CD4-positive, alpha-beta memory T cell (primary cell): ENCODE measurements at regions of chr5 and their contacts with region 1.

Region 1: GRCh38 chr5:41903892-41904799 is at the start of gene RIMOC1:
- DNase-seq: peak; percentile 96 to 98 (median 98)
- H3K4me3 ChIP-seq: peak within 1 kb of the TSS; percentile 82 to 90
- H3K4me3 Mint-ChIP-seq: peak within 1 kb of the TSS; percentile 93 to 99 (median 98)
- H3K27ac ChIP-seq: peak within 1 kb of the TSS; percentile 74
- H3K27ac Mint-ChIP-seq: peak within 1 kb of the TSS; percentile 96 to 100 (median 97)
- H3K4me1 ChIP-seq: peaks cover 16% of the 10 kb centered on the region
- H3K4me1 Mint-ChIP-seq: peaks cover 22 to 48% (median 29%) of the 10 kb centered on the region in 4 donors
- H3K27me3 ChIP-seq: no peaks in the 10 kb centered on the region
- H3K27me3 Mint-ChIP-seq: peaks cover 0 to 2% of the 10 kb centered on the region in 2 donors
- total RNA-seq, gene RIMOC1: 33.1 to 33.7 TPM

Region 2: DNA sequence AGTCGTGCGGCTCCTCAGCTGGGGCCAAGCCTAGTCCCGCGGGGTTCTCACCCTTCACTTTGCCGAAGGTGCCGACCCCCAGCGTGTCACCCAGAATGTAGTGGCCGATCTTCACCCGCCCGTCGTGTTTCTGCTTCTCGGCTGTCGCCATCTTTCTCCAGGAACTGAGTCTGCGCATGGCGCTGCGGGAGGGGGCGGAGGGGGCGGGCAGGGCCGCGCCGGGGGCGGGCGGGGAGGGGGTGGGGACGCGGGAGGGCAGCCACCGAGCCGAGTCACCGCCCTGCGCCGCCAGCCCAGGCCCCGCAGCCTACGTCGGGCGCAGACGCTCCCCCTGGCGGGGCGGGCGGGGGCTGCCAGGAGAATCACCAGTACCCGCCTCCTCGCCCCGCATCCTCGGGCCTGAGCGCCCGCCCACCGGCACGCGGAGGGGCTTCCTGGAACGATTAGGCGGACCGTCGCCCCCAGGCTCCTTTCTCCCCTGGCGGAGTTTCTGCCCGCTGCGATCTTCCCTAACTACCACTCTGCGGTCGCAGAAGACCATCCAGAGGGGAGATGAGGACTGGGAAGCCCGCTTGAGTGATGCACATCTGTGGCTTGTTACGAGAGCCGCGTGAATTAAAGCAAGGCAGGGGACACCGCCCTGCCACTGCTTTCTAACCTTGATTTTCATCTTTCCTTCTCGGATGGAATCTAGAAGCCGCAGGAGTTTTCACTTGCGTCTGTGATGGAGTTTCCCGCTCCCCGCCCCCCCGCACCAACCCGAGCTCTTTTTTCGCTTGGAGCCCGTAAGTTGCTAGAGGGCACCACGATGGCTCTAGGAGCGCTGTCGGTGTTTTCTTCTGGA is 1105.9 kb before region 1 on chr5 and contains the start of gene PRKAA1:
- CTCF ChIA-PET with region 1: no interaction called
- POLR2A ChIA-PET with region 1: no interaction called
- intact Hi-C with region 1: loop called (anchors 1 kb)
- DNase-seq: peak; percentile 88 to 93 (median 91)
- H3K4me3 ChIP-seq: peak within 1 kb of the TSS; percentile 71 to 91
- H3K4me3 Mint-ChIP-seq: peak within 1 kb of the TSS; percentile 91 to 97 (median 94)
- H3K27ac ChIP-seq: peak within 1 kb of the TSS; percentile 91
- H3K27ac Mint-ChIP-seq: peak within 1 kb of the TSS; percentile 91 to 98 (median 95)
- H3K4me1 ChIP-seq: peaks cover 34% of the 10 kb centered on the region
- H3K4me1 Mint-ChIP-seq: peaks cover 27 to 52% (median 42%) of the 10 kb centered on the region in 4 donors
- H3K27me3 ChIP-seq: no peaks in the 10 kb centered on the region
- H3K27me3 Mint-ChIP-seq: no peaks in the 10 kb centered on the region
- total RNA-seq, gene PRKAA1: 113 to 120 TPM

Region 3: DNA sequence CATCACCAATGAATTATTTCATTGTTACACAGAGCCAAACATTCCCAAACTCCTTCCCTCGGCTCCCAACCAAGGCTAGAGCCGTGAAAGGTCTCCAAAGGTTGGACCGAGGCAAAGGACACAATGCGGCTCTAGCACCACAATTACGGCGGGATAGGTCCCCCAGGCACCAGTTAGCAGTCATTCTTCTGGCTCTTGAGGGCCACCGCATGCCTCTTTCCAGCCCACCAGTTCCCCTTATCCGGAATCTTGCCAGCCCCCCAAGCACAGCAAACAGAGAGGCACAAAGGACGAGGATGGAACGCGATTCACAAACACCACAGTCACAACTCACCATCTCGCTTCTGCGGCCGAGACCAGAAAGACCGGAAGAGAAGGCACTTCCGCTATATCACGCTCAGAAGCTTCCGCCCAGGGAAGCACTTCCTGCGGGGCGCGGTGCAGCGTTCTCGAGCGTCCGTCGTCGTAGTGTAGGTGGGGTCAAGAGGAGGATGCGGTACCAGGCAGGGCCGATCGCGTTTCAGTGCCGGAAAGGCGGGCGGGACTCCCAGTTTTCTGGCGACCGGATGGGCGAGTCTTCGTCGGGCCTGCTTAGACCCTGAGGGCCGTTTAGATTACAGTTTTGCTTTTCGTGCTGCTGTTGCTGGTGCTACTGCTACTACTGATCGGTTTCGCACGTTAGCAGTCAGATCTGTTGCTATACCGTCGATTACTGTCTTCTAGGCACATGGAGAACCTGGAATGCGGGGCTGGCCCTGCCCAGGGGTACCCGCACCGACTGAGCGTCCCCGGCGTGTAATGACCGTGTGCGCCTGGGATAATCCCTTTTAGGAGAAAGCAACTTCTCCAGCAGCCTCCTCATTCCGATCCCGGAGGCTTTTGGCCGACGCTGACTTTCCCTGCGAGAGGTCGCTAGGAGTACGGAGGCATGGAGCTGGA is 1069.0 kb before region 1 on chr5 and contains the start of gene RPL37:
- CTCF ChIA-PET with region 1: no interaction called
- POLR2A ChIA-PET with region 1: interaction called, 9 read pairs
- intact Hi-C with region 1: loop called (anchors 1 kb)
- DNase-seq: peak; percentile 88 to 91 (median 90)
- H3K4me3 ChIP-seq: peak within 1 kb of the TSS; percentile 71 to 99
- H3K4me3 Mint-ChIP-seq: peak within 1 kb of the TSS; percentile 97 to 100 (median 98)
- H3K27ac ChIP-seq: peak within 1 kb of the TSS; percentile 92
- H3K27ac Mint-ChIP-seq: peak within 1 kb of the TSS; percentile 94 to 100 (median 99)
- H3K4me1 ChIP-seq: peaks cover 41% of the 10 kb centered on the region
- H3K4me1 Mint-ChIP-seq: peaks cover 20 to 68% (median 47%) of the 10 kb centered on the region in 4 donors
- H3K27me3 ChIP-seq: no peaks in the 10 kb centered on the region
- H3K27me3 Mint-ChIP-seq: no peaks in the 10 kb centered on the region
- total RNA-seq, gene RPL37: 2,354 to 2,406 TPM

Region 4: GRCh38 chr5:41869739-41870626 is 34.2 kb before region 1 on chr5 and contains the start of gene OXCT1:
- CTCF ChIA-PET with region 1: interaction called, 11 read pairs
- POLR2A ChIA-PET with region 1: interaction called, 79 read pairs
- intact Hi-C with region 1: loop called (anchors 1 kb)
- DNase-seq: peak; percentile 91 to 96 (median 96)
- H3K4me3 ChIP-seq: peak within 1 kb of the TSS; percentile 74 to 81
- H3K4me3 Mint-ChIP-seq: peak within 1 kb of the TSS; percentile 85 to 96 (median 91)
- H3K27ac ChIP-seq: peak within 1 kb of the TSS; percentile 93
- H3K27ac Mint-ChIP-seq: peak within 1 kb of the TSS; percentile 94 to 99 (median 97)
- H3K4me1 ChIP-seq: peaks cover 55% of the 10 kb centered on the region
- H3K4me1 Mint-ChIP-seq: peaks cover 37 to 70% (median 46%) of the 10 kb centered on the region in 4 donors
- H3K27me3 ChIP-seq: no peaks in the 10 kb centered on the region
- H3K27me3 Mint-ChIP-seq: no peaks in the 10 kb centered on the region
- total RNA-seq, gene OXCT1: 34.1 to 37.5 TPM

Region 5: GRCh38 chr5:41893074-41893851 is 10.9 kb before region 1 on chr5:
- CTCF ChIA-PET with region 1: no interaction called
- POLR2A ChIA-PET with region 1: interaction called, 15 read pairs
- intact Hi-C with region 1: no loop called
- DNase-seq: no peak
- H3K4me3 ChIP-seq: no peak overlapping the region
- H3K4me3 Mint-ChIP-seq: peak overlapping the region in 5 of 8 donors; percentile 17 to 61 (median 43)
- H3K27ac ChIP-seq: no peak overlapping the region
- H3K27ac Mint-ChIP-seq: peak overlapping the region in 1 of 7 donors; percentile 53
- H3K4me1 ChIP-seq: no peaks in the 10 kb centered on the region
- H3K4me1 Mint-ChIP-seq: peaks cover 0 to 10% (median 6%) of the 10 kb centered on the region in 4 donors
- H3K27me3 ChIP-seq: no peaks in the 10 kb centered on the region
- H3K27me3 Mint-ChIP-seq: peaks cover 1 to 14% of the 10 kb centered on the region in 2 donors

Region 6: DNA sequence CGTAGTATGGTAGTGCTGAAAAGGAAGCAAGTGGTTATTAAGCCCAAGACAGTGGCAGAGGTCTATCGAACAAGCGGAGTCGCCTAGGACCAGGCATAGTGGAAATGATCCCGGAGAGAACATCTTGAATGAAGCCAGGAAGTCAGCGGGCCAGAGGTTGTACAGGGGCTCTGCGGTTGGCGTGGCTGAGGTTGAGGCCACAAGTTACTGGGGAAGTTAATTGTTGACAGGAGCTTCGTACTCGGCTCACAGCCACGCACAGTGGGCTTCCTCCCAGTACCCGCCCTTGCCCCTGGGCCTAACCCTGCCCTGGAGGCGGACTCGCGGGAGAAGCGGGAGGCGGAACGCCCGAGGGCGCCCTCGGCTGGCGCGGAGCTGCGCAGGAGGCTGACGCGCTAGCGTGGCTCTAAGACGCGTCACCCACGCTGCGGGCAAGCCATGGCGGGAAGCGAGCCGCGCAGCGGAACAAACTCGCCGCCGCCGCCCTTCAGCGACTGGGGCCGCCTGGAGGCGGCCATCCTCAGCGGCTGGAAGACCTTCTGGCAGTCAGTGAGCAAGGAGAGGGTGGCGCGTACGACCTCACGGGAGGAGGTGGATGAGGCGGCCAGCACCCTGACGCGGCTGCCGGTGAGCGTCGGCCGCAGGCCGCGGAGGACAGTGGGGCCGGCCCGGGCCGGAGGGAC is 20.9 kb after region 1 on chr5 and contains the start of gene FBXO4:
- CTCF ChIA-PET with region 1: interaction called, 7 read pairs
- POLR2A ChIA-PET with region 1: interaction called, 85 read pairs
- intact Hi-C with region 1: loop called (anchors 1 kb)
- DNase-seq: peak; percentile 89 to 93 (median 91)
- H3K4me3 ChIP-seq: peak within 1 kb of the TSS; percentile 83 to 95
- H3K4me3 Mint-ChIP-seq: peak within 1 kb of the TSS; percentile 81 to 91 (median 89)
- H3K27ac ChIP-seq: peak within 1 kb of the TSS; percentile 93
- H3K27ac Mint-ChIP-seq: peak within 1 kb of the TSS; percentile 81 to 100 (median 98)
- H3K4me1 ChIP-seq: peaks cover 25% of the 10 kb centered on the region
- H3K4me1 Mint-ChIP-seq: peaks cover 10 to 33% (median 22%) of the 10 kb centered on the region in 4 donors
- H3K27me3 ChIP-seq: no peaks in the 10 kb centered on the region
- H3K27me3 Mint-ChIP-seq: no peaks in the 10 kb centered on the region
- total RNA-seq, gene FBXO4: 15.1 to 18.2 TPM

Region 7: DNA sequence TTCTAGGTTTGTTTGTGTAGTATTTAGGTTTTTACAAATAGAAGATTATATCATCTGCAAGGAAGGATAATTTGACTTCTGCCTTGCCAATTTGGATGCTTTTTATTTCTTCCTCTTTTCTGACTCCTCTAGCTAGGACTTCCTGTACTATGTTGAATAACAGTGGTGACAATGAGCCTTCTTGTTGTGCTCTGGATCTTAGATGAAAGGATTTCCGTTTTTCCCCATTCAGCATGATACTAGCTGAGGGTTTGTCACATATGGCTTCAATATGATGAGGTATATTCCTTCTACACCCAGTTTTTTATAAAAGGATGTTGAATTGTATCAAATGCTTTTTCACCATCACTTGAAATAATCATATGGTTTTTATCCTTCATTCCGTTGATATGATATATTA is 122.3 kb after region 1 on chr5:
- CTCF ChIA-PET with region 1: no interaction called
- POLR2A ChIA-PET with region 1: no interaction called
- intact Hi-C with region 1: no loop called
- DNase-seq: no peak
- H3K4me3 ChIP-seq: no peak overlapping the region
- H3K4me3 Mint-ChIP-seq: no peak overlapping the region
- H3K27ac ChIP-seq: no peak overlapping the region
- H3K27ac Mint-ChIP-seq: no peak overlapping the region
- H3K4me1 ChIP-seq: no peaks in the 10 kb centered on the region
- H3K4me1 Mint-ChIP-seq: no peaks in the 10 kb centered on the region
- H3K27me3 ChIP-seq: no peaks in the 10 kb centered on the region
- H3K27me3 Mint-ChIP-seq: peaks cover 7 to 17% of the 10 kb centered on the region in 2 donors

Region 8: DNA sequence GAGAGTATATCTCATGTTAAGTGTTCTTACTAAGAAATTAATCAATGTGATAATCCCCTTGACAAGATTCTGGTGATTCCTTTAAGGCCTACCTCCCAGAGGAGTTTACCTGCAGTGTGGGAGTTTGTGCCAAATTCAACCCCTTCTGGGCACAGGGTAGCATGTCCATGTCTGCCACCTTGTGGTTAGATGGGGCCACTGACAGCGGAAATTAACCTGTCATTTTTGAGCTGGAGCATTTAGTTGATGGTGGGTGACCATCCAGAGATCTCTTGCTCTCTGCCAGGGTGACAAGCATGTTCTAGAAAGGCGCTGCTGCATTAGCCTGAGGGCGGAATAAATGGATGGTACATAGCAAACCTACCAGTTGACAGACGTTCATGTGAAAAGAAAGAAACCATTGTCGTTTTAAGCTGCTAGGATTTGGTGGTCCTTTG is 153.1 kb after region 1 on chr5:
- CTCF ChIA-PET with region 1: interaction called, 10 read pairs
- POLR2A ChIA-PET with region 1: no interaction called
- intact Hi-C with region 1: no loop called
- DNase-seq: peak; percentile 51 to 57 (median 54)
- H3K4me3 ChIP-seq: no peak overlapping the region
- H3K4me3 Mint-ChIP-seq: no peak overlapping the region
- H3K27ac ChIP-seq: no peak overlapping the region
- H3K27ac Mint-ChIP-seq: no peak overlapping the region
- H3K4me1 ChIP-seq: no peaks in the 10 kb centered on the region
- H3K4me1 Mint-ChIP-seq: no peaks in the 10 kb centered on the region
- H3K27me3 ChIP-seq: no peaks in the 10 kb centered on the region
- H3K27me3 Mint-ChIP-seq: peaks cover 4 to 9% of the 10 kb centered on the region in 2 donors